Gastrocnemius medialis (tissue), 4 donors: ENCODE measurements at regions of chr11 and their contacts with region 1.

Region 1: DNA sequence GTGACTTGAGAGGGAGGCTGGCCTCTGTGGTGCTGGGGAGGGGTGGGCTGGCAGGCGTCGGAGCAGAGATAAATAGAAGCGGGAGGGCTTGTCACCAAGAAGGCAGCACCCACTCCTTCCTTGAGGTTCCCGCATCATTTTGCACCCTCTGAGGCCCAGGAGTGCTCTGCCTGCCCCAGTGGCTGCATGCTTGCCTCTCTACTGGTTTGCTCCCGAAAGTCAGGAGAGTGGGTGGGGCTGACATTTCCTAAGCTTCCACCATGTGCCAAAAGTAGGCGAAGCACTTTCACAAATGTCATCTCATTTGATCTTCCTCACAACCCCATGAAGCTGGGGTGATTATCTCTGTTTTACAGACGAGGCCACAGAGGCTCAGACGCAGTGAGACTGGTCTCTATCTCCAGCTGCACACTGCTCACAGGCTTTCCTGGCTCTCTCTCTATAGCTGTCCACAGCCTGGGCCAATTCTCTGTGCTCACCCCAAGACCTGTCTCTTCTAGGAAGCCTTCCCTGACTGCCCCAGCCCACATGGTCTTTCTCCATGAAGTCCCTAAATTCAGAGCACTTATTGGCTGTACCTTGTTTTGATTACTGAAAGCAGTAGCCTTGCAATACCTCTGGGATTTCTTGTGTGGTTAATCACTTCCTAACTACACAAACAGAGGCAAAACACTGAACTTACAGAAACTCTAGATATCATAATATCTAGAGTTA is 2.6 kb upstream of the UCP3 start:
- DNase-seq: peak in 1 of 2 donors; percentile 61
- ATAC-seq: peak in 1 of 2 donors; percentile 13
- H3K4me3 ChIP-seq: no peak overlapping the region
- H3K27ac ChIP-seq: peak overlapping the region; percentile 96 to 99 (median 98)
- H3K4me1 ChIP-seq: peaks cover 34 to 39% of the 10 kb centered on the region in 2 donors
- H3K27me3 ChIP-seq: no peaks in the 10 kb centered on the region
- CTCF ChIP-seq: no peak
- POLR2A ChIP-seq: peak; percentile 16 to 25

Region 2: GRCh38 chr11:73384872-73385689 is 626.4 kb before region 1 on chr11:
- in situ Hi-C with region 1: no loop called
- intact Hi-C with region 1: loop called (anchors 10 kb)
- DNase-seq: peak in 1 of 2 donors; percentile 50
- ATAC-seq: no peak
- H3K4me3 ChIP-seq: no peak overlapping the region
- H3K27ac ChIP-seq: peak overlapping the region; percentile 87 to 99 (median 98)
- H3K4me1 ChIP-seq: peaks cover 99% of the 10 kb centered on the region in 2 donors
- H3K27me3 ChIP-seq: no peaks in the 10 kb centered on the region
- CTCF ChIP-seq: no peak
- POLR2A ChIP-seq: no peak

Region 3: GRCh38 chr11:73982969-73983740 is 28.4 kb before region 1 on chr11:
- in situ Hi-C with region 1: no loop called
- intact Hi-C with region 1: loop called (anchors 1 kb)
- DNase-seq: peak; percentile 93 to 95
- ATAC-seq: peak; percentile 84 to 86
- H3K4me3 ChIP-seq: peak overlapping the region; percentile 66 to 88 (median 75)
- H3K27ac ChIP-seq: peak overlapping the region; percentile 93 to 99 (median 95)
- H3K4me1 ChIP-seq: peaks cover 12 to 36% of the 10 kb centered on the region in 2 donors
- H3K27me3 ChIP-seq: no peaks in the 10 kb centered on the region
- CTCF ChIP-seq: no peak
- POLR2A ChIP-seq: peak; percentile 74 to 92

Region 4: DNA sequence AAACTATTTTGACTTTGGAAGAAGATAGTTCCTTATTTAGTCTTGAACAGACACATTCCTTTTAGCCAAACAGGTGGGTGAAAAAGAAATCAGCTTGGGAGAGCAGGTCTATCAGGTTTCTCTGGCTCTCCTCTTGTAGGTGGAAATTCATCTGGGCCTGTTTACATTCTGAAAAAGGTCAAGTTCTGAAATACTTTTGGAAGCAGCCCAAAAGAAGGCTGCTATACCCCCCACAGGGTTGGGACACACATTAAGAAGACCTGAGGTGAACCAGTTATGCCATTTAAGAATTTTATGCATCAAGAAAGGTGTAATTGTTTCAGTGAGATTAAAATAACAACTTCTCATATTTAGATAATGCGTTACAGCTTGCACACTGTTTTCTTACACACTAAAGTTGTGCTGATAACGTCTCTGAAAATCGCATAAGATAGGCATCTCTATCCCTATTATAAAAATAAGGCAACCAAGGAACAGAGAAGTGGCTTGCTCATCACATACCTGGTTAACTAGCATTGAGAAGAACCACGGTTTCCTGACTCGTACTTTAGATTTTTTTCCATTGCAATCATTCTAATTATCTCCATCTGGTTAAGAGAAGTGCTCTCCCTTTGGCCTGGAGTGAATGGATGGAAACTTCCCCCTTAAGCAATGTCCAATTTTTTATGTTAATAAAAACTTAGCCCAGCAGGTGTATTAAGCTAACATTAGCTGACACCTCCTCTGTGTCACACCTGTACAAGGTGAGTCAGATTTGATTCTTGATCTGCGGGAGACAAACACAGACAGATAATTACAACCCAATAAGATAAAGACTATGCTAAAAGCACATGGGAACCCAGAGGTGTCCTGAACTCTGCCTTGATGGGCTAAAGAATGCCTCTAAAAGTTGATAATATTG is 57.9 kb after region 1 on chr11:
- in situ Hi-C with region 1: no loop called
- intact Hi-C with region 1: loop called (anchors 1 kb)
- DNase-seq: peak; percentile 28 to 39
- ATAC-seq: peak; percentile 73
- H3K4me3 ChIP-seq: peak overlapping the region; percentile 10 to 56 (median 32)
- H3K27ac ChIP-seq: peak overlapping the region; percentile 84 to 94 (median 90)
- H3K4me1 ChIP-seq: peaks cover 23 to 38% of the 10 kb centered on the region in 2 donors
- H3K27me3 ChIP-seq: no peaks in the 10 kb centered on the region
- CTCF ChIP-seq: no peak
- POLR2A ChIP-seq: peak in 1 of 2 donors; percentile 43

Region 5: DNA sequence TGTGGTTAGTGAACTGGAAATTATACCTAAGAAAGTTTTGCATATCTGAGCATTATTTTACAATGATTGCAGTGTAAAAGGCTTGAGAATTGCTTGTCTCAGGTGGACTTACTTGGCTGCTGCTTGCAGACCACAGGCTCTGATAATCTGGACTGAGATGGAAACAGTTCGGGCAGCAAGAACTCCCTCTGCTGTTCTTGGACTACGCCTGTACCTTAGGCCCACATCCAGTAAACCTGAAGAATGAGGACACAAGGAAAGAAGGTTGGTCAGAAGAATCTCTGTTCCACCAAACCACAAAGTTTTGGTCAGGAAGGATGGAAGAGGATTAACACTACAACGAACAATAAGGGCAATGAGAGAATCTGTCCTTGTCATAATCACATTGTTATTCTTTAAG is 79.2 kb after region 1 on chr11:
- in situ Hi-C with region 1: no loop called
- intact Hi-C with region 1: loop called (anchors 2 kb)
- DNase-seq: peak; percentile 13 to 37
- ATAC-seq: peak; percentile 92 to 94
- H3K4me3 ChIP-seq: no peak overlapping the region
- H3K27ac ChIP-seq: no peak overlapping the region
- H3K4me1 ChIP-seq: no peaks in the 10 kb centered on the region
- H3K27me3 ChIP-seq: no peaks in the 10 kb centered on the region
- CTCF ChIP-seq: peak; percentile 41 to 60 (median 48)
- POLR2A ChIP-seq: no peak

Region 6: GRCh38 chr11:74427385-74427886 is 415.9 kb after region 1 on chr11:
- in situ Hi-C with region 1: no loop called
- intact Hi-C with region 1: no loop called
- DNase-seq: no peak
- ATAC-seq: no peak
- H3K4me3 ChIP-seq: no peak overlapping the region
- H3K27ac ChIP-seq: no peak overlapping the region
- H3K4me1 ChIP-seq: no peaks in the 10 kb centered on the region
- H3K27me3 ChIP-seq: no peaks in the 10 kb centered on the region
- CTCF ChIP-seq: no peak
- POLR2A ChIP-seq: no peak